ENCODE measurements at regions of chr17 and their contacts with region 1.

Region 1: GRCh38 chr17:75909812-75910274 is 5.2 kb upstream of the MRPL38 start:
- DNase-seq: no peak
- H3K4me3 ChIP-seq: no peak overlapping the region
- H3K27ac ChIP-seq: peak overlapping the region; percentile 17
- H3K4me1 ChIP-seq: peaks cover 33% of the 10 kb centered on the region
- H3K27me3 ChIP-seq: no peaks in the 10 kb centered on the region
- CTCF ChIP-seq: no peak
- POLR2A ChIP-seq: no peak

Region 2: DNA sequence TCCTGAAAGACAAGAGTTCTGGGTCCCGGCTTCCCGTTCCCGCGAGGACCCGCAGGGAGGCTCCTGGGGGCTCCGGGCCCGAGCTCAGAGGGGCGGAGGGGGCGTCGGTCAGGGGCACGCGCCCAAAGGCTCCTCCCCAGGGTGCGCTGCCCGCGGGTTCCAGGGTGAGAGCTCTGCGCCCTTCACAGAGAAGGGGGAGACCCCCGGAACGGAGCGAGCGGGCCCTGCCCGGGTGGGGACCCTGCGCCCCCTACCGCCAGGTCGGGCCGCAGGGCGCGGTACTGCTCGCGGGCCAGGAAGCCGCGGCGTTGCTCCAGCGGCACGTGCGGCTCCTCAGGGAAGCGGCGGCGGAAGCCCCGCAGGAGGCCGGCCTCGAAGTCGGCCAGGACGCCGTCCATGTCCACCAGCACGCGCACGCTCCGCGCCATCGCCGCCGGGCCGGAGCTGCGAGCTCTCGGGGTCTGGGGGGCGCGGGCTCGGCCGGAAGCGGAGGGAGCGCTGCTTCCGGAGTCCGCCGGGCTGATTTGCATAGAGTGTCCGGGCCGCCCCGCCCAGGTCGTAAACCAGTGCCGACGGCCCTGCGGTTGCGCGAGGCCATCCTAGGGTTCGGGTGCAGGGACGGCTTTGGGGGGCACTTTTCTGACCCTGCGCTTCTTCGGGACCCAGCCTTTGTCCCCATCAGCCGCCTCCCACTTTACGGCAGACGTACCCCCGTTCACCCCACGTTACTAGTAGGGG is 778.4 kb before region 1 on chr17 and contains the start of gene NT5C:
- intact Hi-C with region 1: no loop called
- DNase-seq: no peak
- H3K4me3 ChIP-seq: peak within 1 kb of the TSS; percentile 61 to 69
- H3K27ac ChIP-seq: peak within 1 kb of the TSS; percentile 73
- H3K4me1 ChIP-seq: peaks cover 26% of the 10 kb centered on the region
- H3K27me3 ChIP-seq: no peaks in the 10 kb centered on the region
- CTCF ChIP-seq: peak; percentile 11 to 53 (median 46)
- POLR2A ChIP-seq: peak in 1 of 2 donors; percentile 43
- total RNA-seq, gene NT5C: 98.5 TPM

Region 3: DNA sequence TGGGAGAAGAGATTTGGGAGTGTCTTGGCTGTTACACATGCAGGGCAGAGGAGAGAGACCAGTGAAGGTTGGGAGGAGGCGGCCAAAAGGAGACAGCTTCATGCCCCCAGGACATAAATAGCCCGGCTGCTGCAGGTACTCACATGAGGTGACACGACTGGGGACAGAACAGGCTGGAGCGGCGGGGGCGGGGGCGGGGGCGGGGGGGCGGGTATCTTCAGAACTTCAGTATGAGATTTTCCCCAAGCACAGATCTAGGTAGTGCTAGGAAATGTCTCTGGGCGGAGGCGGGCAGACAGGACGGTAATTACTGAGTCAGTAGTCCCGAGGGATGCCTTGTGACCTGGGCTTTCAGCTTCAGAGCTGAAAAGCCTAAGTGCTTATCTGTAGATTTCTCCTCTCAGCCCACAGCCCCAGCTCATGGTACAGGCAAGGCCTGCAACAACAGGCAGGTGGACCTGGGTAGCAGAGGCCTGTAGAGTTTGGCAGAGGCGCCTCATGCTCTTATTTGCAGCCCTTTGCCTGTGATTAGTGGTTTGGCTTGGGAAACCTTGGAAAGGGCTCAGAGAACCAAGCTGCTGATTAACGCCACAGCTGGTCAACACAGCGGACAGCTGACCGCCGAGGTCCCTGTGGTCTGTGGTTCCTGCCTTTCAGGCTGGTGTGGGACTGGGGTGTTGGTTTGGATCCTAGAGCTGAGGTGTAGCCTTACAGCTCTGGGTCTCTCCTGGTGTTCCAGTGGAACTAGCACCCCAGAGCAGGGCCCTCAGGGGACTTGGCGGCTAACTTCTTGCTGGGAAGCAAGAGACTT is 100.7 kb before region 1 on chr17:
- intact Hi-C with region 1: no loop called
- DNase-seq: no peak
- H3K4me3 ChIP-seq: peak overlapping the region in 1 of 2 donors; percentile 2
- H3K27ac ChIP-seq: peak overlapping the region; percentile 88
- H3K4me1 ChIP-seq: peaks cover 59% of the 10 kb centered on the region
- H3K27me3 ChIP-seq: no peaks in the 10 kb centered on the region
- CTCF ChIP-seq: no peak
- POLR2A ChIP-seq: no peak

Region 4: GRCh38 chr17:75864448-75864871 is 45.4 kb before region 1 on chr17:
- intact Hi-C with region 1: no loop called
- DNase-seq: peak in 1 of 2 donors; percentile 93
- H3K4me3 ChIP-seq: no peak overlapping the region
- H3K27ac ChIP-seq: peak overlapping the region; percentile 75
- H3K4me1 ChIP-seq: peaks cover 51% of the 10 kb centered on the region
- H3K27me3 ChIP-seq: no peaks in the 10 kb centered on the region
- CTCF ChIP-seq: no peak
- POLR2A ChIP-seq: no peak

Region 5: DNA sequence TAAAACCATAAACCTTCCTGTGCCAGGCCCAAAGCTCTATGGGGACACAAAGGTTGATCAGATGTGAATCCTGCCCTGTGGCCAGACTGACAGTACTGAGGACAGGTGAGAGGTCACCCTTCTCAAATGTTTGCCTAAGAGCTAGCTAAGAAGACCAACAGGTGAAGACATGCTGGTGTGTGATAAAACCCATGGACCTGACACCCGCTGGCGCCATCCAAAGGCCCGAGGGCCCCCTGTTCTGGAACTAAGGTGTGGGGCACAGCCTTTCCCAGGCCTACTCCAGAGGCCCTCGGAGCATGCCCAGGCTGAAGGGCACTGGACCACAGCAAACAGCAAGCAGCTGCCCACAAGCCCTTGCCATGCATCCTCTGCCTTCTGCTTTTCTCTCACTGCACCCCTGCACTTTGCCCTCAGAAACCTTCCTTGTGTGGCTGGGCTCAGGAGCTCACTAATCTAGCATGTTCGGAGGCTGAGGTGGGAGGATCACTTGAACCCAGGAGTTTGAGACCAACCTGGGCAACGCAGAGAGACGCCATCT is 85.6 kb after region 1 on chr17:
- intact Hi-C with region 1: no loop called
- DNase-seq: no peak
- H3K4me3 ChIP-seq: no peak overlapping the region
- H3K27ac ChIP-seq: no peak overlapping the region
- H3K4me1 ChIP-seq: peaks cover 13% of the 10 kb centered on the region
- H3K27me3 ChIP-seq: no peaks in the 10 kb centered on the region
- CTCF ChIP-seq: no peak
- POLR2A ChIP-seq: no peak

Region 6: DNA sequence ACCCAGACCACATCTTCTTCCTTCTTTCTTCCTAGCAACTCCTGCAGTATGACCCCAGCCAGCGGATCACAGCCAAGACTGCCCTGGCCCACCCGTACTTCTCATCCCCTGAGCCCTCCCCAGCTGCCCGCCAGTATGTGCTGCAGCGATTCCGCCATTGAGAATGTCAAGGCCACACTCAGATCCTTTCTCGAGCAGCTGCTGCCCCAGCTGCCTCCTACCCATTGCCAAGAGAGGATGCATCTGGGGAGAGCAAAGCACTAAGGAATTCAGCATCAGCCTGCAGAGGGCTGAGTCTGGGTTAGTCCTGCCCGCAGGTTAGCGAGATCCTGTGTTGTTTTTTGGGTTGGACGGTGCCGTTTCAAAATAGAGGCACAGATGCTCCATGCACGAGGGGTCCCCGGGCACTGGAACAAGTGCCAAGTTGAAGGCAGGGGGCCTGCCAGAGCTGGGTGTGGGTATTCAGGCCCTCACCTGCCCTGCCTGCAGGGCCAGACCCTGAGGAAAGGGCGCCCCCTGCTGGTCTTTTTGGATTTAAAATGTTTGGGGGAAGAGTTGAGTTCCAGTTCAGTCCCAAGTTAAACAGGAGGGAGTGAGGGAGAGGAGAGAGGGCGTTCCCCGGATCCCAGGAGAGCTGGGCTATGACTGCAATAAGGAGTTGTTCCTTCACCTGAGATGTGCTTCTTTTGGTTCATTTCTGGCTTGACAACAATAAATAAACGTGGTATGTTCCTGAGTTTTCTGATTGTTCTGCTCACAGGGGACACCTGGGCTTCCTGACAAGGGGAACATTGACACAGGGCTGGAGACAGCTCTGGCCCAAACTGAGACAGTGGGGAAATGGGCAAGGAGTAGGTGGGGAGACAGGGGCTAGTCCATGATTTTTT is 95.7 kb after region 1 on chr17:
- intact Hi-C with region 1: loop called (anchors 5 kb)
- DNase-seq: no peak
- H3K4me3 ChIP-seq: no peak overlapping the region
- H3K27ac ChIP-seq: no peak overlapping the region
- H3K4me1 ChIP-seq: no peaks in the 10 kb centered on the region
- H3K27me3 ChIP-seq: no peaks in the 10 kb centered on the region
- CTCF ChIP-seq: peak; percentile 47 to 78 (median 50)
- POLR2A ChIP-seq: no peak